ENCODE measurements at regions of chr9 and their contacts with region 1.

Region 1: GRCh38 chr9:96777426-96777864 is 442 bp downstream of the ZNF510 start:
- DNase-seq: peak in 2 of 5 donors; percentile 25 to 31
- H3K4me3 ChIP-seq: peak overlapping the region; percentile 82 to 89
- H3K4me3 Mint-ChIP-seq: peak overlapping the region; percentile 90 to 100 (median 98)
- H3K27ac ChIP-seq: peak overlapping the region; percentile 62
- H3K27ac Mint-ChIP-seq: peak overlapping the region; percentile 86 to 99 (median 98)
- H3K4me1 ChIP-seq: peaks cover 19% of the 10 kb centered on the region
- H3K4me1 Mint-ChIP-seq: peaks cover 27 to 51% (median 40%) of the 10 kb centered on the region in 4 donors
- H3K27me3 ChIP-seq: no peaks in the 10 kb centered on the region
- H3K27me3 Mint-ChIP-seq: no peaks in the 10 kb centered on the region

Region 2: GRCh38 chr9:96686548-96687335 is 90.7 kb before region 1 on chr9:
- CTCF ChIA-PET with region 1: no interaction called
- POLR2A ChIA-PET with region 1: interaction called, 3 read pairs
- intact Hi-C with region 1: loop called (anchors 1 kb)
- DNase-seq: peak; percentile 61 to 89 (median 81)
- H3K4me3 ChIP-seq: peak overlapping the region in 1 of 2 donors; percentile 50
- H3K4me3 Mint-ChIP-seq: peak overlapping the region; percentile 72 to 91 (median 88)
- H3K27ac ChIP-seq: peak overlapping the region; percentile 36
- H3K27ac Mint-ChIP-seq: peak overlapping the region; percentile 54 to 88 (median 82)
- H3K4me1 ChIP-seq: no peaks in the 10 kb centered on the region
- H3K4me1 Mint-ChIP-seq: peaks cover 0 to 17% (median 10%) of the 10 kb centered on the region in 4 donors
- H3K27me3 ChIP-seq: no peaks in the 10 kb centered on the region
- H3K27me3 Mint-ChIP-seq: peaks cover 0 to 5% of the 10 kb centered on the region in 2 donors